ENCODE measurements at regions of chr16 and their contacts with region 1.

Region 1: GRCh38 chr16:53099318-53100130 is 44.7 kb downstream of the CHD9 start:
- DNase-seq: peak; percentile 1 to 80 (median 58)
- ATAC-seq: peak; percentile 65
- H3K4me3 ChIP-seq: peak overlapping the region; percentile 40 to 64
- H3K4me3 Mint-ChIP-seq: peak overlapping the region; percentile 78
- H3K27ac ChIP-seq: peak overlapping the region; percentile 45 to 63
- H3K27ac Mint-ChIP-seq: peak overlapping the region; percentile 91
- H3K4me1 ChIP-seq: peaks cover 21% of the 10 kb centered on the region
- H3K4me1 Mint-ChIP-seq: peaks cover 26% of the 10 kb centered on the region
- H3K27me3 ChIP-seq: no peaks in the 10 kb centered on the region
- H3K27me3 Mint-ChIP-seq: no peaks in the 10 kb centered on the region
- CTCF ChIP-seq: no peak

Region 2: DNA sequence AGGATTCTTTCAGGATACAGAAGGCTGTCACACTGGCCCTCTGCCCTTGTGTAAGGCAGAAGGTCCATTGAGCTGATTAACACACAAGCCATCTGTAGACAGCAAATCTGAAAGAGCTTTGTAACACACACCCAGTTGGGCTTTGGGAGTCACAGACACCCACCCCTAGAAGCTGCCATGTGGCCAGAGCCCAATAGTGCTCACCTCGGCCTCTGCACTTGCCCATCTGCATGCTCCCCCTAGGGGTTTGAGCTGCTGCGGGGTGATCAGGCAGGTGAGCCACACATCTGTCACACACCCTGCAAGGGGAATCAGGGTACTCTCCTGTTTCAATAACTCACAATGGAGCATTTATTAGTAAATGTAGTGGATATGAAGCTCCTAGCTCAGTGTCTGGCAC is 185.1 kb before region 1 on chr16:
- CTCF ChIA-PET with region 1: no interaction called
- POLR2A ChIA-PET with region 1: no interaction called
- intact Hi-C with region 1: no loop called
- DNase-seq: no peak
- ATAC-seq: no peak
- H3K4me3 ChIP-seq: no peak overlapping the region
- H3K4me3 Mint-ChIP-seq: no peak overlapping the region
- H3K27ac ChIP-seq: no peak overlapping the region
- H3K27ac Mint-ChIP-seq: no peak overlapping the region
- H3K4me1 ChIP-seq: no peaks in the 10 kb centered on the region
- H3K4me1 Mint-ChIP-seq: no peaks in the 10 kb centered on the region
- H3K27me3 ChIP-seq: no peaks in the 10 kb centered on the region
- H3K27me3 Mint-ChIP-seq: peaks cover 3% of the 10 kb centered on the region
- CTCF ChIP-seq: no peak

Region 3: DNA sequence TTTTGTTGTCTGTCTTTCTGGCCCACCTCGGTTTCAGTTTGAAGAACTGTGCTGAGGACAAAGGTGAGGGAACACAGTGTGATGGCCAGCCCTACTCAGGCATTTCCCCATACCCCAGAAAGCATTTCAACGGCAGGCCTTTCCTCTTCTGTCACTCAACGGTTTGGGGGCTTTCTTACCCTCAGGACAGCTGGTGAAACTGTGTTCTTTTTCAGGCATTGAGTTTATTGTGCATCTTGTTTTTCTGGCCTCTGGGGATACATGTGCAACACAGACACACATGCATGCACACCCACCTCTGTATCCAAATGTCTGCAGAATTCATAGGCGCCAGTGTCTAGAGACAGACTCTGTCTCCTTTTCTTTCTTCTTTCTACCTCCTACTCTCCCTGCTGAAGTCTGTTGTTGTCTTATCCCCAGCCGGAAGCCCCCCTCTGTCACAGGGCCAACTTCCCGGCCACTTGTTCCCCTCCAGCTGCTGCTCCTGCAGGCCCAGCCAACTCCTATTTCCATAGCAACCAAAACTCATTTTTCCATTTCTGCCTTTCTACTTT is 27.7 kb before region 1 on chr16:
- CTCF ChIA-PET with region 1: interaction called, 4 read pairs
- POLR2A ChIA-PET with region 1: interaction called, 3 read pairs
- intact Hi-C with region 1: loop called in 1 of 2 experiments (anchors 5 kb)
- DNase-seq: no peak
- ATAC-seq: no peak
- H3K4me3 ChIP-seq: no peak overlapping the region
- H3K4me3 Mint-ChIP-seq: peak overlapping the region; percentile 49
- H3K27ac ChIP-seq: no peak overlapping the region
- H3K27ac Mint-ChIP-seq: no peak overlapping the region
- H3K4me1 ChIP-seq: peaks cover 32% of the 10 kb centered on the region
- H3K4me1 Mint-ChIP-seq: peaks cover 44% of the 10 kb centered on the region
- H3K27me3 ChIP-seq: no peaks in the 10 kb centered on the region
- H3K27me3 Mint-ChIP-seq: no peaks in the 10 kb centered on the region
- CTCF ChIP-seq: no peak